Lower leg skin (tissue), 4 donors: ENCODE measurements at regions of chr11 and their contacts with region 1.

Region 1: GRCh38 chr11:123439616-123440015 is 9.5 kb downstream of the GRAMD1B start:
- DNase-seq: peak in 1 of 2 donors; percentile 56
- H3K4me3 ChIP-seq: no peak overlapping the region
- CTCF ChIP-seq: no peak
- POLR2A ChIP-seq: no peak

Region 2: DNA sequence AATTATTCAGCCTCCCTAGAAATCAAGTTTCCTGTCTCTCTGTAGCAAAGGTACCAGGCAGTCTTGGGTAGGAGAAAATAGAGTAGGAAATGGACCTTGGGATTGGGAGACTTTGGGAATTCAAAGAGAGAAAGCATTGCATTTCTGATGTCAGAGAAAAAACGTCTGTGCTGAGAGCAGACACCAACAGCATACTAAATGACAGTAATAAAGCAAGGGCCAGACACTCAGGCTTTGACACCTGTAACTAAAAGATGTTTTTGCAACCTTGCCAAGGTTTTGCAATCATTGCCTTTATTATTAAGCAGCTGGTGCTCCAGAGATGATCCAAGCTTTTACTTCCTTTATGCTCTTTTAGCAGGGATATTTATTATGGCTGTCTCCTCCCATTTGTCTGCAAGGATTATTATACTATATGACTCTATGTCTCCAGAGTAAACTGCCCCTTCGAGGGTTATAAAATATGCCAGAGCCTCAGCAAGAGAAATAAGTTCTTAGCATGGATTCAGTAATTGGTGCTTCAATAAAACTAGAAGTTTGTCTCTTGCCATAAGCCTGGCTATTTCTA is 94.7 kb before region 1 on chr11:
- intact Hi-C with region 1: loop called (anchors 10 kb)
- DNase-seq: no peak
- H3K4me3 ChIP-seq: no peak overlapping the region
- CTCF ChIP-seq: no peak
- POLR2A ChIP-seq: no peak

Region 3: DNA sequence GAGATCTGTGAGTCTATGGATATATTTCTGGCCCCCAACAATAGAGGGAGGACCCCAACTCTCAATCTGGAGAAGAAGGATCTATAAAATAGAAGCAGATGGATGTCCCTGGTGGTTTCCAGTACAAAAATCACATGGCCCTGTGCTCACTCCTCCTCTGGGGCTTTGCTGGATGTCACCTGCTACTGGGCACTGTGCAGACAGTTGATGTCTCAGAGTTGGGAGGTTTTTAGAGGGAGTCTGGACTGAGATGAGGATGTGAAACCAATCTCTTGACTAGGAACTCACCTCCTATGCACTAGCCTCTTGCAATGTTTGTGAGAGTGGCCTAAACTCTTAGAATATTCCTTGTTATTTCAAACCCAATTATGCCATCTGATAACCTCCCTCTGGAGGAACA is 107.6 kb after region 1 on chr11:
- intact Hi-C with region 1: no loop called
- DNase-seq: no peak
- H3K4me3 ChIP-seq: no peak overlapping the region
- CTCF ChIP-seq: no peak
- POLR2A ChIP-seq: no peak